ENCODE measurements at regions of chr12 and their contacts with region 1.

Region 1: GRCh38 chr12:65106948-65107347 is 14.2 kb downstream of the WIF1 start:
- DNase-seq: no peak
- H3K4me3 ChIP-seq: no peak overlapping the region
- H3K27ac ChIP-seq: no peak overlapping the region
- H3K4me1 ChIP-seq: no peaks in the 10 kb centered on the region
- H3K27me3 ChIP-seq: no peaks in the 10 kb centered on the region
- CTCF ChIP-seq: peak; percentile 65

Region 2: GRCh38 chr12:64801381-64801780 is 305.6 kb before region 1 on chr12:
- CTCF ChIA-PET with region 1: no interaction called
- POLR2A ChIA-PET with region 1: no interaction called
- intact Hi-C with region 1: loop called (anchors 5 kb)
- DNase-seq: no peak
- H3K4me3 ChIP-seq: no peak overlapping the region
- H3K27ac ChIP-seq: no peak overlapping the region
- H3K4me1 ChIP-seq: peaks cover 22% of the 10 kb centered on the region
- H3K27me3 ChIP-seq: no peaks in the 10 kb centered on the region
- CTCF ChIP-seq: peak; percentile 36

Region 3: DNA sequence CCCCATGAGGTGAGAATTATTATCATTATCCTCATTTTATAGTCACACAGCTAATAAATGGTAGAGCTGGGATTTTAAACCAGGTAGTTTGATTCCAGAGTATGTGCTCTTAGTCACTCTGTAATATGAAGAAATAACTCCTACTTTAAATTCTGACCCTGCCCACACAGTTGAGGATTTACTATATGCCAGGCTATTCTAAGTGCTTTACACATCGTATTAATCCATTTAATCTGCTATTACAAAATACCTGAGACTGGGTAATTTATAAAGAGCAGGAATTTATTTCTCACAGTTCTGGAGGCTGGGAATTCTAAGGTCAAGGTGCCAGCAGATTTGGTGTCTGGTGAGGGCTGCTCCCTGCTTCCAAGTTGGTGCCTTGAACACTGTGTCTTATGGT is 33.8 kb after region 1 on chr12:
- CTCF ChIA-PET with region 1: interaction called, 10 read pairs
- POLR2A ChIA-PET with region 1: no interaction called
- intact Hi-C with region 1: no loop called
- DNase-seq: no peak
- H3K4me3 ChIP-seq: no peak overlapping the region
- H3K27ac ChIP-seq: no peak overlapping the region
- H3K4me1 ChIP-seq: no peaks in the 10 kb centered on the region
- H3K27me3 ChIP-seq: no peaks in the 10 kb centered on the region
- CTCF ChIP-seq: no peak

Measured in PC-9 (cell line).